CD8-positive, alpha-beta T cell (primary cell): ENCODE measurements at regions of chr3 and their contacts with region 1.

Region 1: GRCh38 chr3:46078712-46079400 is 51.6 kb upstream of the XCR1 start:
- DNase-seq: peak; percentile 78 to 94 (median 91)
- ATAC-seq: peak; percentile 99
- H3K4me3 ChIP-seq: no peak overlapping the region
- H3K4me3 Mint-ChIP-seq: no peak overlapping the region
- H3K27ac ChIP-seq: no peak overlapping the region
- H3K27ac Mint-ChIP-seq: no peak overlapping the region
- H3K4me1 ChIP-seq: peaks cover 6% of the 10 kb centered on the region
- H3K4me1 Mint-ChIP-seq: peaks cover 14% of the 10 kb centered on the region
- H3K27me3 ChIP-seq: no peaks in the 10 kb centered on the region
- H3K27me3 Mint-ChIP-seq: no peaks in the 10 kb centered on the region
- CTCF ChIP-seq: peak; percentile 99

Region 2: GRCh38 chr3:45730409-45731154 is 348.3 kb before region 1 on chr3:
- CTCF ChIA-PET with region 1: no interaction called
- POLR2A ChIA-PET with region 1: no interaction called
- intact Hi-C with region 1: no loop called
- DNase-seq: no peak
- ATAC-seq: no peak
- H3K4me3 ChIP-seq: no peak overlapping the region
- H3K4me3 Mint-ChIP-seq: no peak overlapping the region
- H3K27ac ChIP-seq: no peak overlapping the region
- H3K27ac Mint-ChIP-seq: peak overlapping the region; percentile 60
- H3K4me1 ChIP-seq: no peaks in the 10 kb centered on the region
- H3K4me1 Mint-ChIP-seq: peaks cover 19% of the 10 kb centered on the region
- H3K27me3 ChIP-seq: no peaks in the 10 kb centered on the region
- H3K27me3 Mint-ChIP-seq: no peaks in the 10 kb centered on the region
- CTCF ChIP-seq: no peak

Region 3: DNA sequence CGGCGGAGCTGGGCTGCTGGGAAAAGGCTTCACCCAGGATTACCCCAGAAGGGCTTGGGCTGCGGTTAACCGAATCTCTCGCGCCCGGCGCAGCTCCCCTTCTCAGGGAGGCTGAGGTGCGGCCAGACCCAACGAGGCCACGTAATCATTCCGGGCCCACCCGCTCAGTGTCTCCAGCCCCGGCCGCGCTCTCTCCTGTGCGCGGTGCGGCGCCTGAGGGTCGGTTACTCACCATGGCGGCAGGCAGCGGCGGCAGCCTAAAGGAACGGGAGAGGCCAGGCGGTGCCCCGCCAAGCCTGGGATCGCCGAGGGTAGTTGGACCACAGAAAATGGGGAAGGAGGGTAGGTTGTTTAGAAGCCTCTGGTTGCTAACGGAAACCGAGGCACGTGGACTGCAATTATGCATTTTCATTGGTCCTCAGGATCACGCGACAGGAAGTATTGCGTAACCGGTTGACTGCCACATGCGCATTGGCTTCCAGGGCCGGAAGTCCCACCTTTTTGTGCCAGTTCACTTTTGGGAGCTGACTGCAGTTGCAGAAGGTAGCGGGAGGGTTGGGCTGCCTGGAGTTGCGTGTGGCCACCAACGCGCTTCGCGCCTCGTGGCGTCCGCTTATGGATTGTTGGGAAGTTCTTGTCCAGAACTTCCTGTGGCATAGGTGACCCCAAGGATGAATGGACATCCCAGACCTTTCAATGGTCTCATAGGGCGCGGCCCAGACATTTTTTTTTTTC is 236.9 kb before region 1 on chr3 and contains the start of gene LZTFL1:
- CTCF ChIA-PET with region 1: interaction called, 13 read pairs
- POLR2A ChIA-PET with region 1: no interaction called
- intact Hi-C with region 1: loop called in 1 of 2 experiments (anchors 10 kb)
- DNase-seq: peak; percentile 74 to 97 (median 91)
- ATAC-seq: peak; percentile 83
- H3K4me3 ChIP-seq: peak within 1 kb of the TSS; percentile 88 to 89
- H3K4me3 Mint-ChIP-seq: peak within 1 kb of the TSS; percentile 96
- H3K27ac ChIP-seq: peak within 1 kb of the TSS; percentile 89 to 93
- H3K27ac Mint-ChIP-seq: peak within 1 kb of the TSS; percentile 96
- H3K4me1 ChIP-seq: peaks cover 11% of the 10 kb centered on the region
- H3K4me1 Mint-ChIP-seq: peaks cover 16% of the 10 kb centered on the region
- H3K27me3 ChIP-seq: no peaks in the 10 kb centered on the region
- H3K27me3 Mint-ChIP-seq: no peaks in the 10 kb centered on the region
- CTCF ChIP-seq: no peak
- total RNA-seq, gene LZTFL1: 10.0 TPM

Region 4: GRCh38 chr3:45929042-45929679 is 149.7 kb before region 1 on chr3:
- CTCF ChIA-PET with region 1: interaction called, 499 read pairs
- POLR2A ChIA-PET with region 1: no interaction called
- intact Hi-C with region 1: no loop called
- DNase-seq: peak; percentile 39 to 78 (median 66)
- ATAC-seq: peak; percentile 97
- H3K4me3 ChIP-seq: no peak overlapping the region
- H3K4me3 Mint-ChIP-seq: no peak overlapping the region
- H3K27ac ChIP-seq: no peak overlapping the region
- H3K27ac Mint-ChIP-seq: peak overlapping the region; percentile 63
- H3K4me1 ChIP-seq: no peaks in the 10 kb centered on the region
- H3K4me1 Mint-ChIP-seq: peaks cover 4% of the 10 kb centered on the region
- H3K27me3 ChIP-seq: no peaks in the 10 kb centered on the region
- H3K27me3 Mint-ChIP-seq: no peaks in the 10 kb centered on the region
- CTCF ChIP-seq: peak; percentile 72

Region 5: GRCh38 chr3:45972534-45973402 is 106.1 kb before region 1 on chr3:
- CTCF ChIA-PET with region 1: interaction called, 182 read pairs
- POLR2A ChIA-PET with region 1: interaction called, 3 read pairs
- intact Hi-C with region 1: no loop called
- DNase-seq: peak in 1 of 9 experiments; percentile 34
- ATAC-seq: no peak
- H3K4me3 ChIP-seq: no peak overlapping the region
- H3K4me3 Mint-ChIP-seq: no peak overlapping the region
- H3K27ac ChIP-seq: peak overlapping the region in 1 of 2 experiments; percentile 46
- H3K27ac Mint-ChIP-seq: peak overlapping the region; percentile 69
- H3K4me1 ChIP-seq: peaks cover 34% of the 10 kb centered on the region
- H3K4me1 Mint-ChIP-seq: peaks cover 78% of the 10 kb centered on the region
- H3K27me3 ChIP-seq: no peaks in the 10 kb centered on the region
- H3K27me3 Mint-ChIP-seq: no peaks in the 10 kb centered on the region
- CTCF ChIP-seq: no peak

Region 6: DNA sequence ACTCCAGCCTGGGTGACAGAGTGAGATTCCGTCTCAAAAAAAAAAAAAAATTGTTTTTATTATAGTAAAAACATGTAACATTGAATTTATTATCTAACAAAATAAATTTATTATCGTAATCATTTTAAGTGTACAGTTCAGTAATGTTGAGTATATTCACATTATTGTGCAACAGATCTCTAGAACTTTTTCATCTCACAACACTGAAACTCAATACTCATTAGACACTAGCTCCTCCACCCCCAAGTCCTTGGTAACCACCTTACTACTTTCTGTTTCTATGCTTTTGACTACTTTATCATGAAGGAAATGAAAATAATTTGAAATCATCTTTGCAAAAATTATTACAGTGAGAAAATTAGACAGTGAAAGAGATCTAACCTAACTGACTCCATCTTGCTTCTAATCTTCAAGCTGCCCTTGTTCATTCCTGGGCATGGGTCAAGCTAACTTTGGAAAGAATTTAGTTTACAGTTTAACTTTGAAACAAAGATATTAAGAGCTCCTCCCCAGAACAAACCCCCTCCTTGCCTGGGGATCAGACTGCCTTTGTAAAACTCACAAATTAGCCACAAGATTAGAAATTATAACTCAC is 68.2 kb before region 1 on chr3:
- CTCF ChIA-PET with region 1: interaction called, 12 read pairs
- POLR2A ChIA-PET with region 1: no interaction called
- intact Hi-C with region 1: no loop called
- DNase-seq: no peak
- ATAC-seq: no peak
- H3K4me3 ChIP-seq: no peak overlapping the region
- H3K4me3 Mint-ChIP-seq: no peak overlapping the region
- H3K27ac ChIP-seq: no peak overlapping the region
- H3K27ac Mint-ChIP-seq: no peak overlapping the region
- H3K4me1 ChIP-seq: peaks cover 6% of the 10 kb centered on the region
- H3K4me1 Mint-ChIP-seq: peaks cover 9% of the 10 kb centered on the region
- H3K27me3 ChIP-seq: no peaks in the 10 kb centered on the region
- H3K27me3 Mint-ChIP-seq: no peaks in the 10 kb centered on the region
- CTCF ChIP-seq: no peak

Region 7: DNA sequence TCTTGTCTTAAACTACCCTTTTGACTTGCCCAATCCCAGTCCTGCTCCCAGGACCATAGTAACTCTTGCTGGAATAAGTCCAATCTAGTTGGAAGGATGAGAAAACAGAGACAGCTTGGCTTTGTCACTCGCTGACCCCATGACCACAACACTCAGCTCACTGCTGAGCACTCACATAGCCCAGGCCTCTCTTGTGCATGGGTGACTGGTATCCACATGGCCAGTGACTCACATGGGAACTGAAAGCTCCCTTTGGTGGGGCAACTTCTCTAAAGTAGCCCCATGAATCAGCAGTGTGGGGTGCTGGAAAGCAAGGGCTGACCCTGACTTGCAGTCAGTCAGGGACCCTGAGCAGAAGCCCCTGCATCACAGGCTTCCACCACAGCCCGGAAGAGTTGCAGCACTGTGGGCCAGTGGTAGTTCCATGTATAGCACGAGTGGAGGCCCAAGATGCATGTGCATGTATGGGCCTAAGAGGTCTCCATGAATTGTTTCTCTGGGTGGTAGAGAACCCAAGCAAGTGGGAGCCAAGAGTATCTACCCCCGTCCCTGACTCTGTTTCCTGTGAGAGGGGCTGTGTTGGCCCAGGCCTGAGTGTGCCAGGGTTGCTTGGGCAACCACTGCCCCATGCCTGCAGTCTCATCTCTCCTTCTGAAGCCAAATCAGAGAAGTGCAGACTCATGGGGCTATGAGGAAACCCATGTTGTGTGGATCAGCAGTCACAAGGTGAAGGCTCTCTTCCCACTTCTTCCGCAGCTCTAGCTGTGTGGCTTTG is 10.6 kb after region 1 on chr3:
- CTCF ChIA-PET with region 1: interaction called, 61 read pairs
- POLR2A ChIA-PET with region 1: no interaction called
- intact Hi-C with region 1: no loop called
- DNase-seq: peak in 1 of 9 experiments; percentile 51
- ATAC-seq: no peak
- H3K4me3 ChIP-seq: no peak overlapping the region
- H3K4me3 Mint-ChIP-seq: no peak overlapping the region
- H3K27ac ChIP-seq: no peak overlapping the region
- H3K27ac Mint-ChIP-seq: no peak overlapping the region
- H3K4me1 ChIP-seq: no peaks in the 10 kb centered on the region
- H3K4me1 Mint-ChIP-seq: peaks cover 14% of the 10 kb centered on the region
- H3K27me3 ChIP-seq: no peaks in the 10 kb centered on the region
- H3K27me3 Mint-ChIP-seq: no peaks in the 10 kb centered on the region
- CTCF ChIP-seq: no peak

Region 8: DNA sequence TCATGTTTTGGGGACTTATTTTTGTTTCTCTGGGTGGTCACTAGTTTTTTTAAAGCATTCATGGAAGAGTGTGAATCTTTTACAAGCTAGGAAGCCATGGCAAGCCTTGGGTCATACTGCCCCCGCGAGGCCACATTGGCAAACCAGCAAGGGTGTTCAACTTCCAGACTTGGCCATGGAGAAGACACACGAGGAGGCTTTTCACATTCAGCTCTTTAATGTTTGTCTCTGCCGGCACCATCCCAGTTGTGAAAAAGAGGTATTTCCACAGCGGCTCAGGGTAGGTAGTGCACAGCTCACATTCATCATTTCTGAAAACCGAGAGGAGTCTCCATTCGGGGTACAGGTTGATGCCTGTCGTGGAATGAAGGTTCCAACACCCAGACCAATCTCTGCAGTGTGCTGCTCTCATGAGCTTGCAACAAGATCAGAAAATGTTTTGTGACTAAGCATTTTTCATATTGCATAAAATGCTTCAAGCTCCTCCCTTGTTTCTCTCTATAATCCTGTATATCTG is 299.6 kb after region 1 on chr3:
- CTCF ChIA-PET with region 1: interaction called, 24 read pairs
- POLR2A ChIA-PET with region 1: no interaction called
- intact Hi-C with region 1: loop called in 1 of 2 experiments (anchors 2 kb)
- DNase-seq: peak; percentile 26 to 76 (median 64)
- ATAC-seq: peak; percentile 53
- H3K4me3 ChIP-seq: no peak overlapping the region
- H3K4me3 Mint-ChIP-seq: no peak overlapping the region
- H3K27ac ChIP-seq: no peak overlapping the region
- H3K27ac Mint-ChIP-seq: peak overlapping the region; percentile 28
- H3K4me1 ChIP-seq: peaks cover 33% of the 10 kb centered on the region
- H3K4me1 Mint-ChIP-seq: peaks cover 60% of the 10 kb centered on the region
- H3K27me3 ChIP-seq: no peaks in the 10 kb centered on the region
- H3K27me3 Mint-ChIP-seq: no peaks in the 10 kb centered on the region
- CTCF ChIP-seq: peak; percentile 55